ENCODE measurements at regions of chr14 and their contacts with region 1.

Region 1: GRCh38 chr14:73802431-73803188 is 49.0 kb upstream of the PTGR2 start:
- DNase-seq: no peak
- ATAC-seq: no peak

Region 2: DNA sequence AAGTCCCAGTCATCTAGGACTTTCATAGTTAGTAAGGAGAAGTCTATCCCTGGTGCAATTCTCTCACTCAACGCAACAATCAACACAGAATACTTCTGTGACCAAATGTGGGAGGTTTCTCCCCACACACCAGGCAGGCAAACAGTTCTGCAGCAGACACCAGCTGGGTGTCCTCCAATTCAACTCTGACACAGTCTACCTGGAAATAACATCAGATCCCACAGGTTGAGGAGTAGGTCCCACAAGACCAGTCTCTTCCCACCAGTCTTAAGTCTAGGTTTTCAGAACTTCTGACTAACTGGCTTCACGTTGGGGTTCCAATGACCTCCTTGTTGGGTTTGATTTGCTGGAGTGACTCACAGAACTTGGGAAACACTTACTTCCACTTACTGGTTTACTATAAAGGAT is 175.5 kb before region 1 on chr14:
- intact Hi-C with region 1: no loop called
- DNase-seq: no peak
- ATAC-seq: no peak

Region 3: GRCh38 chr14:75044322-75044721 is 1241.7 kb after region 1 on chr14:
- intact Hi-C with region 1: loop called (anchors 5 kb)
- DNase-seq: no peak
- ATAC-seq: no peak

Measured in sciatic nerve (tissue), 2 donors.